T-cell (primary cell): ENCODE measurements at regions of chr4 and their contacts with region 1.

Region 1: GRCh38 chr4:125789023-125789422 is 474.3 kb downstream of the FAT4 start:
- DNase-seq: no peak
- ATAC-seq: no peak
- H3K4me3 ChIP-seq: no peak overlapping the region
- H3K4me3 Mint-ChIP-seq: no peak overlapping the region
- H3K27ac ChIP-seq: no peak overlapping the region
- H3K27ac Mint-ChIP-seq: no peak overlapping the region
- H3K4me1 ChIP-seq: no peaks in the 10 kb centered on the region
- H3K4me1 Mint-ChIP-seq: no peaks in the 10 kb centered on the region
- H3K27me3 ChIP-seq: no peaks in the 10 kb centered on the region
- H3K27me3 Mint-ChIP-seq: no peaks in the 10 kb centered on the region

Region 2: GRCh38 chr4:124862261-124862660 is 926.8 kb before region 1 on chr4:
- CTCF ChIA-PET with region 1: interaction called in 1 of 2 experiments, 11 read pairs
- POLR2A ChIA-PET with region 1: no interaction called
- DNase-seq: no peak
- ATAC-seq: no peak
- H3K4me3 ChIP-seq: no peak overlapping the region
- H3K4me3 Mint-ChIP-seq: no peak overlapping the region
- H3K27ac ChIP-seq: no peak overlapping the region
- H3K27ac Mint-ChIP-seq: no peak overlapping the region
- H3K4me1 ChIP-seq: no peaks in the 10 kb centered on the region
- H3K4me1 Mint-ChIP-seq: no peaks in the 10 kb centered on the region
- H3K27me3 ChIP-seq: no peaks in the 10 kb centered on the region
- H3K27me3 Mint-ChIP-seq: no peaks in the 10 kb centered on the region